ENCODE measurements at regions of chr10 and their contacts with region 1.

Region 1: DNA sequence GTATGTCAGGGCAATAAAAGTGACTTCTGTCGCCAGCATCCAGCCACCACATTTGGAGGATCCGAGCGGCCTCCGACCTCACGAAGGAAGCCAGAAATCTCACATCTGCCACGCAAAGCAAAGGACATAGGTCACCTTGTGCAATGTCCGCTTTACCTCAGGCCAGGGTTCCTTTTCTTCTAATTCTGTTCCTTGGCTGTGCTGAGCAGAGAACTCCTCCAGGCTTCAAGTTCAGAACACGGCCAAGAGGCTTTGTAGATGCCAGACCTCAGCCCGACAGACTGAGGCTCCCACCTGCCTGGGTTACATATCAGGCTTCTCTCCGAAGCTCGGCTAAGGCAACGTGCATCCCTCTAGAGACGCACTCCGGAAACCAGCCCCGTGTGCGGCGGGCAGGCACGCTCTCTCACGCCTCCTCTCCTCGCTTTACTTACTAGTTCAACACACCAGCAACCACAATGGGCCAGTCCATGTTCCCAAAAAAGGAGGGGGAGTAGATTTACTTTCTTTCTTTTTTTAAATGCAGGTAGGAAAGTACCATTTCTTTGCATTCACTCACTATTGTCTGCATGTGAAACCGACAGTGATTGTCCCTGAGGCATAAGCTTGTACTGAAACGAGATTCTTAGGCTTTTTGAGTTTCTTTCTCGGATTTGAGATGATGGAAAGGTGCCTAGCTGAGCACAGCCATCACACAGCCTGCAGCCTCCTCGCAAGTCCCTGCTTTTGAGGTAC is 122.4 kb upstream of the AFAP1L2 start:
- DNase-seq: peak; percentile 64 to 97 (median 95)
- ATAC-seq: peak; percentile 94
- H3K4me3 ChIP-seq: peak overlapping the region; percentile 85
- H3K4me3 Mint-ChIP-seq: peak overlapping the region; percentile 88 to 100 (median 98)
- H3K27ac ChIP-seq: peak overlapping the region; percentile 94
- H3K27ac Mint-ChIP-seq: peak overlapping the region; percentile 92 to 100 (median 98)
- H3K4me1 ChIP-seq: peaks cover 35 to 45% of the 10 kb centered on the region in 2 donors
- H3K4me1 Mint-ChIP-seq: peaks cover 34 to 64% (median 53%) of the 10 kb centered on the region in 7 donors
- H3K27me3 ChIP-seq: no peaks in the 10 kb centered on the region
- H3K27me3 Mint-ChIP-seq: peaks cover 0 to 4% (median 0%) of the 10 kb centered on the region in 5 donors

Region 2: DNA sequence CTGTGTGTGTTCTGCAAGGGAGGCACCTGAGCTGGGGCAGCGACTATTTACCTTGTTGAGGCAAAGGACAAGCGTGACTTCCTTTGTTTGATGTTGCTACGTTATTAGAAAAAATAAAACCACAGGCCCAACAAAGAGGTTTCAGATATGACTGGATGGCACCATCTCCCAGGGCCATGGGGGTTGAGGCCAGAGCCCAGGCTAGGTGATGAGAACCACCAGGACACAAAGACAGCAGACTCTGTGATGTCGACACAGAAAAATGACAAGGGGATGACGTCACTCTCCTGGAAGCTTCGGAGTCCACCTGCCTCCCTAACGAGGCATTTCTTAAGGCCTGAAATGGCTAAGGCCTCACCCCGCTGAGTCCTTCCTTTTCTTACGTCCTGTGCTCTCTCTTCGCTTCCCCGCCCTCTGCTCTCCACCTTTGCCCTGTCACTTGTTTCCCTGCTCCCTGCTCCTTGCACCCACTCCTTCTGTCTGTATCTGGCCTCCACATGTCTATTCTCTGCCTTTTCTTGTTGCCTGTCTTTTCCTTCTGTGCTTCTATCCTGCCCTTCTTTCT is 566.0 kb before region 1 on chr10:
- CTCF ChIA-PET with region 1: no interaction called
- POLR2A ChIA-PET with region 1: no interaction called
- intact Hi-C with region 1: loop called in 1 of 2 experiments (anchors 5 kb)
- DNase-seq: peak in 5 of 9 donors; percentile 4 to 34 (median 21)
- ATAC-seq: no peak
- H3K4me3 ChIP-seq: peak overlapping the region; percentile 27
- H3K4me3 Mint-ChIP-seq: peak overlapping the region; percentile 31 to 79 (median 67)
- H3K27ac ChIP-seq: no peak overlapping the region
- H3K27ac Mint-ChIP-seq: peak overlapping the region in 8 of 9 donors; percentile 30 to 92 (median 82)
- H3K4me1 ChIP-seq: peaks cover 37 to 47% of the 10 kb centered on the region in 2 donors
- H3K4me1 Mint-ChIP-seq: peaks cover 26 to 64% (median 49%) of the 10 kb centered on the region in 7 donors
- H3K27me3 ChIP-seq: no peaks in the 10 kb centered on the region
- H3K27me3 Mint-ChIP-seq: peaks cover 0 to 27% (median 6%) of the 10 kb centered on the region in 5 donors

Region 3: DNA sequence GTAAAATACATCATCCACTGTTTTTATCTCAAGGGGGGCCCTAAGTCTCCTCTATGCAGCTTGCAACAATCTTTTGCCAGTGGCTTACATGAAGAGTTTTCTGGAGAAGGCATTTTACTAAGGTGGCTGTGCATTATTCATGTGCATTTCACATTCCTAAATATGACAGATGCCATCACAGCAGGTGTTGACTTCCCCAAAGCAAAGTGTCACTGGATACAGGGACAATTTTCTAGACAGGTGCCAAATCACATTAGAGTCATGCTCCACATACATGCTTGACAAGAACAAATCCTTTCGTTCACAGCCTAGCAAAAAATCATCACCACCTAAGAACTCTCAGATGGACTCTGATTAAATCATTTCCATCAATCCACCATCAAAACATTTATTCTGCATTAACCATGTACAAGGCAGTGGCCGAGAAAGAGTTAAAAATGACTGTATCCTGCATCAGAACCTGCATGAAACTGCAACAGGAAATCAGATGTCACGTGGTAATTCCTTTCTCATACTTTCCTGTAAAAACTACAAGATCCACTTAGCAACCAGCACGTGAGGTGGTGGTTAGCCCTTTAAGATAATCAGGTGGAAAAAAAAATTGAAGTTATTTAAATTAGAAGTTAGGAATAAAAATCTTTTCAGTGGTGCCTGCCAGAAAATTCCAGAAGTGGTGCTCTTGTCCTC is 34.2 kb before region 1 on chr10:
- CTCF ChIA-PET with region 1: interaction called, 7 read pairs
- POLR2A ChIA-PET with region 1: interaction called, 189 read pairs
- intact Hi-C with region 1: loop called in 1 of 2 experiments (anchors 1 kb)
- DNase-seq: peak in 7 of 9 donors; percentile 47 to 73 (median 62)
- ATAC-seq: peak; percentile 55
- H3K4me3 ChIP-seq: peak overlapping the region; percentile 19
- H3K4me3 Mint-ChIP-seq: peak overlapping the region; percentile 56 to 83 (median 74)
- H3K27ac ChIP-seq: peak overlapping the region; percentile 74
- H3K27ac Mint-ChIP-seq: peak overlapping the region; percentile 14 to 94 (median 71)
- H3K4me1 ChIP-seq: peaks cover 16 to 55% of the 10 kb centered on the region in 2 donors
- H3K4me1 Mint-ChIP-seq: peaks cover 42 to 94% (median 84%) of the 10 kb centered on the region in 7 donors
- H3K27me3 ChIP-seq: no peaks in the 10 kb centered on the region
- H3K27me3 Mint-ChIP-seq: no peaks in the 10 kb centered on the region

Region 4: GRCh38 chr10:114515298-114515914 is 11.3 kb before region 1 on chr10:
- CTCF ChIA-PET with region 1: interaction called, 60 read pairs
- POLR2A ChIA-PET with region 1: interaction called, 145 read pairs
- intact Hi-C with region 1: loop called (anchors 1 kb)
- DNase-seq: peak in 1 of 9 donors; percentile 36
- ATAC-seq: no peak
- H3K4me3 ChIP-seq: no peak overlapping the region
- H3K4me3 Mint-ChIP-seq: peak overlapping the region in 9 of 10 donors; percentile 72 to 97 (median 89)
- H3K27ac ChIP-seq: peak overlapping the region; percentile 94
- H3K27ac Mint-ChIP-seq: peak overlapping the region in 8 of 9 donors; percentile 74 to 100 (median 97)
- H3K4me1 ChIP-seq: peaks cover 8 to 90% of the 10 kb centered on the region in 2 donors
- H3K4me1 Mint-ChIP-seq: peaks cover 78 to 98% (median 94%) of the 10 kb centered on the region in 7 donors
- H3K27me3 ChIP-seq: no peaks in the 10 kb centered on the region
- H3K27me3 Mint-ChIP-seq: no peaks in the 10 kb centered on the region

Region 5: GRCh38 chr10:114937962-114938855 is 411.5 kb after region 1 on chr10 and contains the start of gene TRUB1:
- CTCF ChIA-PET with region 1: no interaction called
- POLR2A ChIA-PET with region 1: no interaction called
- intact Hi-C with region 1: loop called in 1 of 2 experiments (anchors 2 kb)
- DNase-seq: peak; percentile 59 to 91 (median 87)
- ATAC-seq: peak; percentile 100
- H3K4me3 ChIP-seq: peak within 1 kb of the TSS; percentile 87
- H3K4me3 Mint-ChIP-seq: peak within 1 kb of the TSS; percentile 94 to 99 (median 96)
- H3K27ac ChIP-seq: peak within 1 kb of the TSS; percentile 79
- H3K27ac Mint-ChIP-seq: peak within 1 kb of the TSS; percentile 95 to 98 (median 96)
- H3K4me1 ChIP-seq: peaks cover 12 to 23% of the 10 kb centered on the region in 2 donors
- H3K4me1 Mint-ChIP-seq: peaks cover 20 to 43% (median 31%) of the 10 kb centered on the region in 7 donors
- H3K27me3 ChIP-seq: no peaks in the 10 kb centered on the region
- H3K27me3 Mint-ChIP-seq: no peaks in the 10 kb centered on the region
- total RNA-seq, gene TRUB1: 6.8 to 14.6 (median 12.9) TPM

Measured in naive thymus-derived CD4-positive, alpha-beta T cell (primary cell).